ENCODE measurements at regions of chr1 and their contacts with region 1.

Region 1: GRCh38 chr1:52927212-52928014 is at the start of gene SCP2:
- DNase-seq: peak; percentile 75
- H3K4me3 Mint-ChIP-seq: peak within 1 kb of the TSS; percentile 76
- H3K27ac Mint-ChIP-seq: peak within 1 kb of the TSS; percentile 50
- H3K4me1 Mint-ChIP-seq: peaks cover 5% of the 10 kb centered on the region
- H3K27me3 Mint-ChIP-seq: no peaks in the 10 kb centered on the region
- CTCF ChIP-seq: no peak
- total RNA-seq, gene SCP2: 53.8 and 61.3 TPM in 2 replicates

Region 2: GRCh38 chr1:53014791-53015507 is 87.5 kb after region 1 on chr1:
- CTCF ChIA-PET with region 1: interaction called, 3 read pairs
- POLR2A ChIA-PET with region 1: interaction called, 7 read pairs
- intact Hi-C with region 1: loop called (anchors 5 kb)
- DNase-seq: peak; percentile 86
- H3K4me3 Mint-ChIP-seq: peak overlapping the region; percentile 85
- H3K27ac Mint-ChIP-seq: peak overlapping the region; percentile 80
- H3K4me1 Mint-ChIP-seq: peaks cover 17% of the 10 kb centered on the region
- H3K27me3 Mint-ChIP-seq: no peaks in the 10 kb centered on the region
- CTCF ChIP-seq: no peak

Region 3: GRCh38 chr1:53038566-53038965 is 111.2 kb after region 1 on chr1:
- CTCF ChIA-PET with region 1: no interaction called
- POLR2A ChIA-PET with region 1: no interaction called
- intact Hi-C with region 1: no loop called
- DNase-seq: no peak
- H3K4me3 Mint-ChIP-seq: no peak overlapping the region
- H3K27ac Mint-ChIP-seq: no peak overlapping the region
- H3K4me1 Mint-ChIP-seq: no peaks in the 10 kb centered on the region
- H3K27me3 Mint-ChIP-seq: no peaks in the 10 kb centered on the region
- CTCF ChIP-seq: no peak

Region 4: DNA sequence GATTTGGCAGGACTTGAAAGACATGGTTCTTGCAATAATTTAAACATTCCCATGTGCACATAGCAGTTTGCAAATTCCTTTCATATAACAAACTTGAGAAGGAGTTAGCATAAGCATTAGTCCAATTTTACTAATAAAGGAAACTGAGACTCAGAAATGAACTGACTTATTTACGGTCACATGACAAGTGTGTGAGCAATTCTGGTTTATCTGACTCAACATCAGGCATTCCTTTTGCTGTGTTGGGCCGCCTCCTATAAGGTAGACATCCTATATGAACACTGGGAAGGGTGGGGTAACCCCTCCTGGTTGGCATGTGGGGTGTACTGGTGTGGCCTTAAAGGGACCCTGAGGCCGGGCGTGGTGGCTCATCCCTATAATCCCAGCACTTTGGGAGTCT is 260.7 kb after region 1 on chr1:
- CTCF ChIA-PET with region 1: interaction called, 5 read pairs
- POLR2A ChIA-PET with region 1: no interaction called
- intact Hi-C with region 1: loop called (anchors 5 kb)
- DNase-seq: no peak
- H3K4me3 Mint-ChIP-seq: no peak overlapping the region
- H3K27ac Mint-ChIP-seq: no peak overlapping the region
- H3K4me1 Mint-ChIP-seq: peaks cover 7% of the 10 kb centered on the region
- H3K27me3 Mint-ChIP-seq: no peaks in the 10 kb centered on the region
- CTCF ChIP-seq: no peak

Measured in MCF 10A (cell line).